ENCODE measurements at regions of chr6 and their contacts with region 1.

Region 1: DNA sequence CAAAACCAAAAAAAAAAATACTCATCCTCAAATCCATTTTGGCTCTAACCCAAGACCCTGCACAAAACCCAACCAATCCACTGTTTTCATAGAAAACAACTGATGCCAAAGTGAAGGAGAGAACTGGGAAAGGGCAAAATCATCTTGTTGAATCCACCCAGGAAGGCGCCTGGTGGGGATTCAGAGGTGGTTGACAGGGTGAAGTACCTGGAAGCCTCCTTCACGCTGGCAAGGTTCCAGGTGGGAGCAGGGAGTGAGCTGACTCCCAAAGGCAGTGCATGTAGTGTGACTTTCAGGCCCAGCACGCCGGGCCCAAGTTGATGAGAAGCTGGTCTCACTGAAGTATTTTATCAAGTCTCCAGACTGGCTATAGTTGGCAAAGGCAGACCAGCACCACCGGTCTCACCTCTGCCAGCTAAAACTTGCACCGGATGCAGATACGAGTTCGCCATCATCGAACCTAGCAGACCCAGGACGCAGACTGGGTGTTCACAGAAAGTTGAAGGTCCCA is 16.5 kb downstream of the PPP1R10 start:
- DNase-seq: peak in 1 of 3 donors; percentile 19
- ATAC-seq: no peak
- H3K4me3 ChIP-seq: no peak overlapping the region
- H3K4me1 ChIP-seq: no peaks in the 10 kb centered on the region
- CTCF ChIP-seq: no peak

Region 2: GRCh38 chr6:30483677-30484279 is 116.7 kb before region 1 on chr6:
- intact Hi-C with region 1: loop called in 1 of 2 experiments (anchors 5 kb)
- DNase-seq: peak in 1 of 3 donors; percentile 85
- ATAC-seq: peak; percentile 39
- H3K4me3 ChIP-seq: no peak overlapping the region
- H3K4me1 ChIP-seq: no peaks in the 10 kb centered on the region
- CTCF ChIP-seq: no peak

Region 3: GRCh38 chr6:30541515-30542403 is 58.7 kb before region 1 on chr6:
- intact Hi-C with region 1: loop called in 1 of 2 experiments (anchors 10 kb)
- DNase-seq: peak; percentile 79 to 85 (median 85)
- ATAC-seq: peak; percentile 92
- H3K4me3 ChIP-seq: no peak overlapping the region
- H3K4me1 ChIP-seq: peaks cover 5% of the 10 kb centered on the region
- CTCF ChIP-seq: peak; percentile 95

Region 4: GRCh38 chr6:30672445-30673253 is 72.1 kb after region 1 on chr6 and contains the start of gene DHX16:
- intact Hi-C with region 1: no loop called
- DNase-seq: peak; percentile 93 to 99 (median 95)
- ATAC-seq: peak; percentile 97
- H3K4me3 ChIP-seq: peak within 1 kb of the TSS; percentile 96
- H3K4me1 ChIP-seq: peaks cover 9% of the 10 kb centered on the region
- CTCF ChIP-seq: peak; percentile 86
- total RNA-seq, gene DHX16: 31.0 to 36.2 (median 36.0) TPM

Region 5: DNA sequence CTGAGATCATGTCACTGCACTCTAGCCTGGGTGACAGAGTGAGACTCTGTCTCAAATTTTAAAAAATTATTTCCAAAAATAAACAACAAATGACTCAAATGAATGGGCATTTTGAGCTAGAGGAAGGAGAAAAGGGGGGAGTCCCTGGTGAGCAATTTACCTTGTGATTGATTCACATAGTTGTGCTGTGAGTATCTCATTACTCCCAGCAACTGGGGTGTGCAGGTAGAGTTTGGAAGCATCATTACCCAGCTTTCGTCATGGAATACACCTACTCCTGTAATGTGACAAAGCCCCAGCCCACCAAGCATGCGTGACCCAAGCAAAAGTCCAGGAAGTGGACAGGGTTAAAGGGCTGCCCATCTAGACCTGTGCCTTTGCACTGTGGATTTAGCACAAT is 403.8 kb after region 1 on chr6:
- intact Hi-C with region 1: no loop called
- DNase-seq: no peak
- ATAC-seq: no peak
- H3K4me3 ChIP-seq: no peak overlapping the region
- H3K4me1 ChIP-seq: no peaks in the 10 kb centered on the region
- CTCF ChIP-seq: no peak

Measured in mucosa of descending colon (tissue), 3 donors.